ENCODE measurements at regions of chr11 and their contacts with region 1.

Region 1: GRCh38 chr11:118380571-118380970 is 20.8 kb upstream of the ATP5MG start:
- DNase-seq: no peak
- H3K4me3 ChIP-seq: no peak overlapping the region
- H3K27ac ChIP-seq: no peak overlapping the region
- H3K4me1 ChIP-seq: no peaks in the 10 kb centered on the region
- H3K27me3 ChIP-seq: no peaks in the 10 kb centered on the region
- CTCF ChIP-seq: no peak
- POLR2A ChIP-seq: no peak

Region 2: DNA sequence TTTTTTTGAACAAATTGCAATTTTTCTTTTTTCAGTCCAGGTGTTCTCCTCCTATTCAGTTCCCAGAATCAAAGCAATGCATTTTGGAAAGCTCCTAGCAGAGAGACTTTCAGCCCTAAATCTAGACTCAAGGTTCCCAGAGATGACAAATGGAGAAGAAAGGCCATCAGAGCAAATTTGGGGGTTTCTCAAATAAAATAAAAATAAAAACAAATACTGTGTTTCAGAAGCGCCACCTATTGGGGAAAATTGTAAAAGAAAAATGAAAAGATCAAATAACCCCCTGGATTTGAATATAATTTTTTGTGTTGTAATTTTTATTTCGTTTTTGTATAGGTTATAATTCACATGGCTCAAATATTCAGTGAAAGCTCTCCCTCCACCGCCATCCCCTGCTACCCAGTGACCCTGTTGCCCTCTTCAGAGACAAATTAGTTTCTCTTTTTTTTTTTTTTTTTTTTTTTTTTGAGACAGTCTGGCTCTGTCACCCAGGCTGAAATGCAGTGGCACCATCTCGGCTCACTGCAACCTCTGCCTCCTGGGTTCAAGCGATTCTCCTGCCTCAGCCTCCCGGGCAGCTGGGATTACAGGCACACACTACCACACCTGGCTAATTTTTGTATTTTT is 27.4 kb before region 1 on chr11:
- intact Hi-C with region 1: no loop called
- DNase-seq: no peak
- H3K4me3 ChIP-seq: no peak overlapping the region
- H3K27ac ChIP-seq: no peak overlapping the region
- H3K4me1 ChIP-seq: peaks cover 0 to 10% (median 0%) of the 10 kb centered on the region in 6 donors
- H3K27me3 ChIP-seq: no peaks in the 10 kb centered on the region
- CTCF ChIP-seq: peak; percentile 11 to 65 (median 47)
- POLR2A ChIP-seq: no peak

Region 3: GRCh38 chr11:118488480-118489109 is 108.0 kb after region 1 on chr11:
- intact Hi-C with region 1: loop called (anchors 5 kb)
- DNase-seq: peak; percentile 85
- H3K4me3 ChIP-seq: no peak overlapping the region
- H3K27ac ChIP-seq: no peak overlapping the region
- H3K4me1 ChIP-seq: peaks cover 0 to 9% (median 0%) of the 10 kb centered on the region in 6 donors
- H3K27me3 ChIP-seq: no peaks in the 10 kb centered on the region
- CTCF ChIP-seq: peak; percentile 50 to 83 (median 78)
- POLR2A ChIP-seq: no peak

Region 4: GRCh38 chr11:118757876-118758399 is 377.4 kb after region 1 on chr11:
- intact Hi-C with region 1: loop called (anchors 10 kb)
- DNase-seq: no peak
- H3K4me3 ChIP-seq: no peak overlapping the region
- H3K27ac ChIP-seq: no peak overlapping the region
- H3K4me1 ChIP-seq: peaks cover 0 to 2% (median 0%) of the 10 kb centered on the region in 6 donors
- H3K27me3 ChIP-seq: no peaks in the 10 kb centered on the region
- CTCF ChIP-seq: no peak
- POLR2A ChIP-seq: no peak